Activated CD4-positive, alpha-beta memory T cell treated with anti-CD3 and anti-CD28 coated beads for 36 hours (primary cell): ENCODE measurements at regions of chr19 and their contacts with region 1.

Region 1: DNA sequence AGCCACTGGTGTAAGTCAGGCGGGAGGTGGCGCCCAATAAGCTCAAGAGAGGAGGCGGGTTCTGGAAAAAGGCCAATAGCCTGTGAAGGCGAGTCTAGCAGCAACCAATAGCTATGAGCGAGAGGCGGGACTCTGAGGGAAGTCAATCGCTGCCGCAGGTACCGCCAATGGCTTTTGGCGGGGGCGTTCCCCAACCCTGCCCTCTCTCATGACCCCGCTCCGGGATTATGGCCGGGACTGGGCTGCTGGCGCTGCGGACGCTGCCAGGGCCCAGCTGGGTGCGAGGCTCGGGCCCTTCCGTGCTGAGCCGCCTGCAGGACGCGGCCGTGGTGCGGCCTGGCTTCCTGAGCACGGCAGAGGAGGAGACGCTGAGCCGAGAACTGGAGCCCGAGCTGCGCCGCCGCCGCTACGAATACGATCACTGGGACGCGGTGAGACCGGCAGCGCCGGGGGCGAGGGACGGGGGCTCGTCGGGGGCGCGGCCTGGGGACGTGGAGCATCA is at the start of gene ALKBH7:
- DNase-seq: peak; percentile 98
- H3K4me3 Mint-ChIP-seq: peak within 1 kb of the TSS; percentile 80
- H3K27ac Mint-ChIP-seq: peak within 1 kb of the TSS; percentile 88
- H3K4me1 Mint-ChIP-seq: peaks cover 11% of the 10 kb centered on the region
- H3K27me3 Mint-ChIP-seq: no peaks in the 10 kb centered on the region
- total RNA-seq, gene ALKBH7: 57.6 to 58.5 TPM

Region 2: DNA sequence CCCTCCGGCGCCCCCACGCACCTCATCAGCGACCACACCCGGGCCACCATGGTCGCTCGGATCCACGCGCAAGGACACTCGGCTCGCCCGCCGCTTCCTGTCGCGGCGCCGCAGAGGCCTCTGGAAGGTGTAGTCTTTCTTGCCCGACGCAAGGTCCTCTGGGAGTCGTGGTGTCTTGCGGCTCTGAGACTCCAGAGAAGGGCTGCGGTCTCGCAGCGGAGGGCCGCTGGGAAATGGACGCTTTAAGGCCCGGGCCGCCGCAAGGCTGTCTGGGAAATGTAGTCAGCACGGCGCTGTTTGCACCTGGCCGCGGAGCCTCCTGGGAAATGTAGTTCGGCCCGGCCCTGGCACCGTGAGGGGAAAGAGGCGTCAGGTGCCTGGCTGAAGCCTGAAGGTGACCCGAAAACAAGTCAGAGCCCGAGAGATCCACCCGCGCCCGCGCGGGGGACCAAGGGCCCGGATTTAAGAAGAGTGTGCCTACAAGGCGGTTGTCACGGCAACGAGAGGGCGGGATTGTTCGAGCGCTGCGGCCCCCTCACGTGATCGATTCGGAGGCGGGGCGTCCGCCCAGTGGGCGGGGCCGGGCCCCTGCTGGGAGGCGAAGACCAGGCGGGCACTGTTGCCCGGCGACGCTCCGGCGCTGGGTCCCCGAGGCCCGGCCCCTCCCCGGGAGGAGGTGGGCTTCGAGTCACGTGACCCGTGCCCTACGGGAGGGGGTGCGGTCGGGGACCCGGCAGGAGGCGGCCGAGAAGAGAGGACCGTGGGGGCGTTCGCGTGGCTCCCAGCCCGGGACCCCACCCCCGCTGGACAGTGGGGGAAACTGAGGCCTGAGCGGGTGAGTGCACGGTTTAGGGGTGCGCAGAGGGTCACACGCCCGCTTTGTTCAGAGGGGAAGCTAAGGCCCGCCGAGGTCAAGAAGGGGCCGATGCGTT is 691.9 kb before region 1 on chr19 and contains the starts of genes HSD11B1L and MICOS13:
- CTCF ChIA-PET with region 1: no interaction called
- POLR2A ChIA-PET with region 1: no interaction called
- intact Hi-C with region 1: loop called (anchors 1 kb)
- DNase-seq: peak; percentile 99
- H3K4me3 Mint-ChIP-seq: peak within 1 kb of the TSS; percentile 96
- H3K27ac Mint-ChIP-seq: peak within 1 kb of the TSS; percentile 89
- H3K4me1 Mint-ChIP-seq: peaks cover 17% of the 10 kb centered on the region
- H3K27me3 Mint-ChIP-seq: no peaks in the 10 kb centered on the region
- total RNA-seq, gene HSD11B1L: 3.8 to 4.1 TPM
- total RNA-seq, gene MICOS13: 50.9 to 55.3 TPM

Region 3: GRCh38 chr19:6238643-6239281 is 133.9 kb before region 1 on chr19:
- CTCF ChIA-PET with region 1: no interaction called
- POLR2A ChIA-PET with region 1: no interaction called
- intact Hi-C with region 1: no loop called
- DNase-seq: no peak
- H3K4me3 Mint-ChIP-seq: no peak overlapping the region
- H3K27ac Mint-ChIP-seq: no peak overlapping the region
- H3K4me1 Mint-ChIP-seq: peaks cover 43% of the 10 kb centered on the region
- H3K27me3 Mint-ChIP-seq: no peaks in the 10 kb centered on the region

Region 4: DNA sequence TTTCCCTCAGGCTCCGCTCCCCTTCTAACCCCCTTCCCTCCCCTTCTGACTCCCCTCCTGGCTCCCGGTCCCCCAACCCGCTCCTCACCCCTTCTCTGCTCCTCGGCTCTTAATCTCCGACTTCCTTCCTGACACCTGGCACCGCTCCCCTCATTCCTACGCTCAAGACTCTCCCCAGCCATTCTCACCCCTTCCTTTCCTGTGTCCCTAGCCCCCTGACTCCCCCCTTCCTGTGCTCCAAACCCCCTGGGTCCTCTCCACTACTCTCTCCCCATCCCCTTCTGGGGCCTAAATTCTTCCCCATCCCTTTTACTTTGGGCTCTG is 10.7 kb before region 1 on chr19:
- CTCF ChIA-PET with region 1: interaction called, 5 read pairs
- POLR2A ChIA-PET with region 1: interaction called, 29 read pairs
- intact Hi-C with region 1: loop called (anchors 1 kb)
- DNase-seq: no peak
- H3K4me3 Mint-ChIP-seq: peak overlapping the region; percentile 98
- H3K27ac Mint-ChIP-seq: peak overlapping the region; percentile 95
- H3K4me1 Mint-ChIP-seq: peaks cover 18% of the 10 kb centered on the region
- H3K27me3 Mint-ChIP-seq: no peaks in the 10 kb centered on the region

Region 5: DNA sequence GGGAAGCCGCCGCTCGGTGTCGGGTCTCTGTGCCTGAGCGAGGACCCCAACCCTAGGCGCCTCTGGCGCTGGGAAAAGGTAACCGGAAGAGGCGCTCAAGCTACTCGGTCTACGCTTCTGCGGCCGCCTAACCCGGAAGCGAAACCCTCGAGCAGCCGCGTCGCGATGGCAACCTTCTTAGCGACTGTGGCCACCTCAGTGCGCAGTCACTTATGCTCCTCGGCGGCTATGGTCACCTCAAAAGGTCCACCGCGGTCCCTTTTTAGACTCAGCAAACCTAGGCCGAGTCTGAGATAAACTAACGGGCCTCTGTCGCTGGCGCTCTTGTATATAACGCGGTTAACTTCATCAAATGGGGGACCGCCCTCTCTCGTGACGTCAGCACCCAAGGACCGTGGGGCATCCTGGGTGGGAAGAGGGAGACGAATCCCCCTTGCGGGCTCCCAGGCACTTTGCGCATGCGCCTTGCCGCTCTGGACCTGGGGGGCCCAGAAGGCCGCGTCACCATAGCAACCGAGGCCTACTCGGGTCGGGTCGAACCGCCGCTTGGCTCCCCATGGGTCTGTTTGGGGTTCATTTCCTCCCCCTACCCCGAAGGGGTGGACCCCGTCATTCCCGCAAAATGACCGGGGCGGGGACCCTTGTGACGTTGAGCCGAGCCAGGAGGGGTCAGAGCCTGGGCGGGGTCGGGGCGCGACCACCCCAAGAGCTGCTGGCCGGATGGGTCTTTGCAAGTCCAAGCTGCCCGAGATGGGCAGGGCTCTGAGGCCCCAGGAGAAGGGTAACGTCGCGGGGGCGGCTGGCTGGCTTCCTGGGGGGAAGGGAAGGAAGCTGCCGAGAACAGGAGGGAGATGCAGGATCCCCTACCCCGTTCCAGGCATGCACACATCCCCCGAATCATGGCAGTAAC is 20.7 kb after region 1 on chr19 and contains the start of gene GTF2F1:
- CTCF ChIA-PET with region 1: no interaction called
- POLR2A ChIA-PET with region 1: interaction called, 3 read pairs
- intact Hi-C with region 1: loop called (anchors 1 kb)
- DNase-seq: peak; percentile 94
- H3K4me3 Mint-ChIP-seq: peak within 1 kb of the TSS; percentile 94
- H3K27ac Mint-ChIP-seq: peak within 1 kb of the TSS; percentile 93
- H3K4me1 Mint-ChIP-seq: peaks cover 24% of the 10 kb centered on the region
- H3K27me3 Mint-ChIP-seq: no peaks in the 10 kb centered on the region
- total RNA-seq, gene GTF2F1: 67.0 to 70.9 TPM